ENCODE measurements at regions of chr4 and their contacts with region 1.

Region 1: DNA sequence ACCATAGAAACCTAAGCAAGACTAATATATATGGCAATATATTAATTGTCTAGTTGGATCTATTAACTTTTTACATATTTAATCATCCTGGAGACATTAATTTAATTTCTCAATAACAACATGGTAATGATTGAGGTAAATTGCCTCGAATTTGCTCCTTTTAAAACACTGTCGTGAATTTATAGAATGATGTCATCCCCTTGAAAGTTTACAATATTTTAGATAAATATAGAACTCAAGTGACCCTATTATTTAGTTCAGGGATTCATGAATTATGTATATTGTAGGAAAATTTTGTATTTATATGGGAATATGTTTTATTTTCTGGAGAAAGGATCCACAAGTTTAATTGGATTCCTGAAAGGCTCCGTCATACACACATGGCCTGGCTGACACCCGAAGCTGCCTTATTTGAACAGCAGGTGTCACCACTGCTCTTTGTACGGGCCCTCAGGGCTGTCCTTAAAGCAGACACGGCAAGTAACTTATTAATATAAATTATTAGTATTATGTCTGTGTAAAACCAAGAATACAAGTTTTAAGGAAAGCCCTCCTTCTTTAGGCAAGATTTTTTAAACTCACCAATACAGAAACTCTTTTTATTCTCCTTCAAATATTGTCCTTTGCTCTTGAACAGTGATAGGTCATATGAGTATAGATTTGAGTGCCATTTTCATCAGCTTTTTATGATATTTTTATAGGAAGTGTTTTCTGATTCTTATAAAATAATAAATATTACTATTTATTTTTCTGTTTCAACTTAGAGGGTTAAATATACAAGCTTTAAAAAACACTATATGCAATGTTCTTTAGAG is 1.9 kb upstream of the PLRG1 start:
- DNase-seq: peak; percentile 87
- H3K4me3 ChIP-seq: no peak overlapping the region
- H3K27ac ChIP-seq: no peak overlapping the region
- H3K4me1 ChIP-seq: peaks cover 10 to 45% (median 34%) of the 10 kb centered on the region in 6 donors
- H3K27me3 ChIP-seq: no peaks in the 10 kb centered on the region
- CTCF ChIP-seq: peak; percentile 50 to 95 (median 80)
- POLR2A ChIP-seq: no peak

Region 2: DNA sequence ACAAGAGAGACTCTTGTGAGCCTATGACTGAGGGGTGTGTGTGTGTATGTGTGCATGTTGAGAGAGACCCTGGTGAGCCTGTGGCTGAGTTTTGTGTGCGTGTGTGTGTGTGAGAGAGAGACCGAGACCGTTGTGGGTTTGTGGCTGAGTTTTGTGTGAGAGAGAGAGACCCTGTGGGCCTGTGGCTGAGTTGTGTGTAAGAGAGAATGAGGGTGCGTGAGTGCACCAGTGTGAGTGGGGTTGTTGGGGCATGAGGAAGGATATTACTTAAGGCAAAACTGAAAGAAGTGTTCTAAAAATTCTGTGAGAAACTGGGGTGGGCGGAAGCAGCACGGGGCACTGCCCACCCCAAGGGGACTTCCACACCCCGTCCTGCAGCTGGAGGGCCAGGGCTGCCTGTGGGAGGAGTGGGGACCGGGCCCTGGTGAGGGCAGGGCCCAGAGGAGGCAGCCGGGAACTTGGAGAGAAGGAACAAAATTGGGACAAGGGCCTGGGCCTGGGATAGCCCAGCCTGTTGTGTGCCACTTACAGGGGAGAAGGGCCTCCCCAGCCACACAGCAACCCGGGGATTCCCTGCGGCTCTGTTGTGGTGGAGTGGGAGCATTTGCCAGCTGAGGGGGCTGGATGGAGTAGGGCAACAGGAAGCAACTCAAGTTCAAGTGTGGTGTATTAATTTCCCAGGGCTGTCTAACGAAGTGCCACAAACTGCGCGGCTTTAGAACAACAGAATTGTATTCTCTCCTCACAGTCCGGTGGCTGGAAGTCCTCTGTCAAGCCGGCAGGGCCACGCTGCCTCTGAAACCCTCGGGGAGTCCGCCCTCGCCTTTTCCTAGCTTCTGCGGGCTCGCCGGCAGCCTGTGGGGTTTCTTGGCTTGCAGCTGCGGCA is 1063.8 kb before region 1 on chr4:
- intact Hi-C with region 1: no loop called
- DNase-seq: peak; percentile 89
- H3K4me3 ChIP-seq: peak overlapping the region; percentile 7 to 62 (median 30)
- H3K27ac ChIP-seq: peak overlapping the region; percentile 76 to 91 (median 88)
- H3K4me1 ChIP-seq: peaks cover 70 to 99% (median 95%) of the 10 kb centered on the region in 6 donors
- H3K27me3 ChIP-seq: no peaks in the 10 kb centered on the region
- CTCF ChIP-seq: no peak
- POLR2A ChIP-seq: no peak

Region 3: GRCh38 chr4:154376486-154376885 is 175.6 kb before region 1 on chr4:
- intact Hi-C with region 1: no loop called
- DNase-seq: no peak
- H3K4me3 ChIP-seq: no peak overlapping the region
- H3K27ac ChIP-seq: no peak overlapping the region
- H3K4me1 ChIP-seq: no peaks in the 10 kb centered on the region
- H3K27me3 ChIP-seq: no peaks in the 10 kb centered on the region
- CTCF ChIP-seq: no peak
- POLR2A ChIP-seq: no peak

Region 4: GRCh38 chr4:154779362-154779947 is 227.4 kb after region 1 on chr4:
- intact Hi-C with region 1: loop called (anchors 5 kb)
- DNase-seq: no peak
- H3K4me3 ChIP-seq: no peak overlapping the region
- H3K27ac ChIP-seq: no peak overlapping the region
- H3K4me1 ChIP-seq: no peaks in the 10 kb centered on the region
- H3K27me3 ChIP-seq: peaks cover 0 to 15% (median 0%) of the 10 kb centered on the region in 7 donors
- CTCF ChIP-seq: peak in 5 of 11 experiments; percentile 12 to 34 (median 19)
- POLR2A ChIP-seq: no peak

Region 5: DNA sequence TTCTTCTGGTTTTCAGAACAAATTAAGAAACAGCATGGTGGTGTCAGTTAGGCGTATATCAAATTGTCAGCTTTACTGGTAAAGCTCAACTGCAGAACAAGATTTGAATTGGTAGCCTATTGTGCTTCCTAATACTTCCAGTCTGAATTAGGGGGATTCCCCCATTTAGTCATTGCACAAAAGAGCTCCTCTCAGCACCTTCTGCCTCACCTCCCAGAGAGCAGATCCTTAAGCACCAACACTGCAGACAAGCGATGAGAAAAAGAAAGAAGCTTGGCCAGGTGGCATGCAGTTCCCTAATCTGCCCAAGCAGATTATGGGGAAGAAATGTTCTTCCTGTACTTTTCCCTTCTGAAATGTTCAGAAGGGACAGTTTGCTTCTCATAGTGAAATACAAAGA is 815.5 kb after region 1 on chr4:
- intact Hi-C with region 1: loop called (anchors 10 kb)
- DNase-seq: no peak
- H3K4me3 ChIP-seq: no peak overlapping the region
- H3K27ac ChIP-seq: no peak overlapping the region
- H3K4me1 ChIP-seq: peaks cover 0 to 10% (median 0%) of the 10 kb centered on the region in 6 donors
- H3K27me3 ChIP-seq: no peaks in the 10 kb centered on the region
- CTCF ChIP-seq: no peak
- POLR2A ChIP-seq: no peak